CD8-positive, alpha-beta T cell (primary cell): ENCODE measurements at regions of chr7 and their contacts with region 1.

Region 1: GRCh38 chr7:144738708-144739314 is 97.0 kb downstream of the TPK1 start:
- DNase-seq: peak in 4 of 9 experiments; percentile 13 to 63 (median 34)
- ATAC-seq: peak; percentile 58
- H3K4me3 ChIP-seq: no peak overlapping the region
- H3K4me3 Mint-ChIP-seq: no peak overlapping the region
- H3K27ac ChIP-seq: no peak overlapping the region
- H3K27ac Mint-ChIP-seq: no peak overlapping the region
- H3K4me1 ChIP-seq: no peaks in the 10 kb centered on the region
- H3K4me1 Mint-ChIP-seq: peaks cover 9% of the 10 kb centered on the region
- H3K27me3 ChIP-seq: no peaks in the 10 kb centered on the region
- H3K27me3 Mint-ChIP-seq: no peaks in the 10 kb centered on the region
- CTCF ChIP-seq: peak; percentile 94

Region 2: DNA sequence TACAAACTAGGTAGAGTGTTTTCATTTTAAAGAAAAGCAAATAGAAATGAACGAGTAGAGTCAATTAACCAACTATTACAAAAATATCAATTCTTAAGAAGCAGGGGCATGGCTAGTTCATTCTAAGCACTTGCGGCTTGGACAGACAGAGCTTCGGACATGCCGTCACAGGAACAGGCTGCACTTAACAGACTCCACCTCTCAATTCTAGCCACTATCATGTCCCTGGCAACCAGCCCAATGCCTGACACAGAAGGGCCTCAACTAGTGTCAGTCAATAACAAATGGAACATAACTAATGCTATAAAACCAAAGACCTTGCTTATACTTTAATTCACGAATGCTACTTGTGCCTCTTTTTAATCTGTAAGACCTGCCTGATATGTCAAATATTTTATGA is 22.7 kb after region 1 on chr7:
- CTCF ChIA-PET with region 1: interaction called, 3 read pairs
- POLR2A ChIA-PET with region 1: no interaction called
- intact Hi-C with region 1: loop called in 1 of 2 experiments (anchors 2 kb)
- DNase-seq: no peak
- ATAC-seq: no peak
- H3K4me3 ChIP-seq: no peak overlapping the region
- H3K4me3 Mint-ChIP-seq: no peak overlapping the region
- H3K27ac ChIP-seq: no peak overlapping the region
- H3K27ac Mint-ChIP-seq: no peak overlapping the region
- H3K4me1 ChIP-seq: no peaks in the 10 kb centered on the region
- H3K4me1 Mint-ChIP-seq: no peaks in the 10 kb centered on the region
- H3K27me3 ChIP-seq: no peaks in the 10 kb centered on the region
- H3K27me3 Mint-ChIP-seq: no peaks in the 10 kb centered on the region
- CTCF ChIP-seq: no peak

Region 3: DNA sequence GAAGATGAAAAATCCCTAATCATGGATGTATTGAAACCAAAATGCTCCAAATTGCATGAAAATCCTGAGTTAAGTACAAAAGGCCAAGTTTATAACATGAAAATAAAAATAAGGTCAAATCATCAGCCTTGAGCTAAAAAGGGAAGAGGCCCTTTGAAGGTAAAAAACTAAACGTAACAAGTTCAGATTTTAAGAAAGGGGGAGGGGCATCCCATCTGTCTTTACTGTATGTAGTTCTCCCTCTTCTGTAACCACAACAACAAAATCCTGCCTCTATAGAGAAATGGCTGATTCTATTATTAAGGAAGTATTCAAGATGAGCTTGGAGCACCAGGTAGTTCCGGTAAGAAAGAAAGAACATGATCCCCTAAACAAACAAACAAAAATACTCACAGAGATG is 32.4 kb after region 1 on chr7:
- CTCF ChIA-PET with region 1: no interaction called
- POLR2A ChIA-PET with region 1: interaction called, 4 read pairs
- intact Hi-C with region 1: loop called in 1 of 2 experiments (anchors 5 kb)
- DNase-seq: no peak
- ATAC-seq: no peak
- H3K4me3 ChIP-seq: no peak overlapping the region
- H3K4me3 Mint-ChIP-seq: no peak overlapping the region
- H3K27ac ChIP-seq: no peak overlapping the region
- H3K27ac Mint-ChIP-seq: no peak overlapping the region
- H3K4me1 ChIP-seq: peaks cover 13% of the 10 kb centered on the region
- H3K4me1 Mint-ChIP-seq: peaks cover 29% of the 10 kb centered on the region
- H3K27me3 ChIP-seq: no peaks in the 10 kb centered on the region
- H3K27me3 Mint-ChIP-seq: no peaks in the 10 kb centered on the region
- CTCF ChIP-seq: no peak

Region 4: GRCh38 chr7:144786522-144786921 is 47.7 kb after region 1 on chr7:
- CTCF ChIA-PET with region 1: interaction called, 4 read pairs
- POLR2A ChIA-PET with region 1: no interaction called
- intact Hi-C with region 1: loop called in 1 of 2 experiments (anchors 5 kb)
- DNase-seq: peak in 2 of 9 experiments; percentile 31 to 50
- ATAC-seq: no peak
- H3K4me3 ChIP-seq: no peak overlapping the region
- H3K4me3 Mint-ChIP-seq: no peak overlapping the region
- H3K27ac ChIP-seq: no peak overlapping the region
- H3K27ac Mint-ChIP-seq: no peak overlapping the region
- H3K4me1 ChIP-seq: no peaks in the 10 kb centered on the region
- H3K4me1 Mint-ChIP-seq: peaks cover 7% of the 10 kb centered on the region
- H3K27me3 ChIP-seq: no peaks in the 10 kb centered on the region
- H3K27me3 Mint-ChIP-seq: no peaks in the 10 kb centered on the region
- CTCF ChIP-seq: no peak

Region 5: DNA sequence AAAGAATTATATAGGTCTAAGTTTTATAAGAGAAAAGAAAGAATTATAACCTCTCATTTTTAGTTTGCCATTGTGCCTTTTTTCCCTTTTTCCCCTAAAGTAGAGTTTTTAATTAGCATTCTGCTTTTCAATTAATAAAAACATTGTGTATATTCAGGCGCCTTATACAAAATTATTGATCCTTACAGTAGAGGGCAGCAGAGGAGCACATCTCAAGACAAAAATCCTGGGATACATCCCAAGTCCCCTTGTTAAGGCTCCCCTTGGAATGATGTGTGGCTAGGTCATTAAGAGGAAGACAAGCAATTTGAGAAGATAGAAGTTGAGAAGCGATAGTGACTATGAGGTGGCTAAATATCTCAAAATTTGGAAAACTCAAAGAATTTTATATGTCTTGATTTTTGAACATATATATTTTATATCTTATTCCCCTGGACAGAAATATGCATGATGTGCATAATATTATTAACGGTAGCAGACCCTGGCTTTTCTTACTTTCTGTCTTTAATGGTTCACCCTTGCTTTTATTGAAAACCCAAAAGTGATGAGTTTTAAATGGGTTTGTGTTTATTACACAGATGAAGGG is 116.1 kb after region 1 on chr7:
- CTCF ChIA-PET with region 1: interaction called, 5 read pairs
- POLR2A ChIA-PET with region 1: no interaction called
- intact Hi-C with region 1: loop called (anchors 2 to 5 kb)
- DNase-seq: peak in 1 of 9 experiments; percentile 32
- ATAC-seq: no peak
- H3K4me3 ChIP-seq: no peak overlapping the region
- H3K4me3 Mint-ChIP-seq: no peak overlapping the region
- H3K27ac ChIP-seq: no peak overlapping the region
- H3K27ac Mint-ChIP-seq: no peak overlapping the region
- H3K4me1 ChIP-seq: no peaks in the 10 kb centered on the region
- H3K4me1 Mint-ChIP-seq: no peaks in the 10 kb centered on the region
- H3K27me3 ChIP-seq: no peaks in the 10 kb centered on the region
- H3K27me3 Mint-ChIP-seq: no peaks in the 10 kb centered on the region
- CTCF ChIP-seq: no peak

Region 6: DNA sequence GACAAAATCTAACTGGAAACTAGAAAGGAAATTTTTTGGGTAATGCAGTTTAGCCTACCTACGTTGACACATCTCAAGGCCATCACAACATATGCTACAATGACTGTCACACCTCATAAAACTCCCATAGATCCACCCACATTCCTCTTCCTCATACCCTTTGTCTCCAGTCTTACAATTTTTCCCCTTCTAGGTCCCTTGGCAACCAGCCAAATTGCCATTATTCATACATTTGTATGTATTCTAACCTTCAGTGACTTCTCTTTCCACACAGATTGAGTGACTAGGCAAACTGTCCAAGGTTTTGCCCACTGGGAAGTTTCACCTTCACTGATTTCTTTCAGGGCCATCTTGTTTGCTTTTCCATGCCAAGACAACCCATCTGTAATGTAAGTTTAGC is 197.5 kb after region 1 on chr7:
- CTCF ChIA-PET with region 1: no interaction called
- POLR2A ChIA-PET with region 1: no interaction called
- intact Hi-C with region 1: loop called in 1 of 2 experiments (anchors 10 kb)
- DNase-seq: no peak
- ATAC-seq: no peak
- H3K4me3 ChIP-seq: no peak overlapping the region
- H3K4me3 Mint-ChIP-seq: no peak overlapping the region
- H3K27ac ChIP-seq: no peak overlapping the region
- H3K27ac Mint-ChIP-seq: no peak overlapping the region
- H3K4me1 ChIP-seq: no peaks in the 10 kb centered on the region
- H3K4me1 Mint-ChIP-seq: no peaks in the 10 kb centered on the region
- H3K27me3 ChIP-seq: no peaks in the 10 kb centered on the region
- H3K27me3 Mint-ChIP-seq: no peaks in the 10 kb centered on the region
- CTCF ChIP-seq: no peak

Region 7: DNA sequence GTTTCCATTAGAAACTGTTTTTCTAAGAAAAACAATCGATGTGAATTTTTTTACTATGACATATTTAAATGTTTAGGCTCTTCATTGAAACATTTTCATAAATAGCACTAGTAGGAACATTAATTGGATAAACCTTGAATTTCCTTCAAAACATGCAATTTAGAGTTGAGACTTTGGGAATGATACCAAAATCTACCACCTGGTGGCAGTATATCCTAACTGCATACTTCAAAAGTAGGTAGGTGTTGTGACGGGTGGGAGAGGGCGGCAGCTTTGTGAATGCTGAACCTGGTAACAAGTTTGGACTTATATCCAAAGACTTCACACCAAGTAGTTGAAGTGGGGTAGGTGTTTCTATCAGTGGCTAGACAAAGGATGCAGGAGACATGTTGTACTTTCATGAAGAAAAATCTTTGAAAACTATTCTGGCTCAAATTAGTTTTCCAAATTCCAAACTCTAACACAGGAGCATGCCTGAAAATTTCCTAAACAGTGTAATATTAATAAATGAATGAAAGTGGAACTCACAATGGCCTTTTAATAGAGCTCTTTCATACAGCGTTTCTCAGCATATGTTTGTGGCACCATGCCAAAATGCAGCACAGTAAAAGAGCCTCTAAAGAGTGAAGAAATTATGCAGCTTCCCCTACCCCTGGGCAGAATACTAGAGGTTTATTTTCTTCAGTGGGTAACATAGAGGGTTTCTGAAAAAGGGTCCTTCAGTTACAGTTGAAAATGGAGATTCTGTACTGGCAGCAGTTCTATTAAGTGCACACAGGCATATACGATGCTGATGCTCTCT is 298.0 kb after region 1 on chr7:
- CTCF ChIA-PET with region 1: interaction called, 3 read pairs
- POLR2A ChIA-PET with region 1: no interaction called
- intact Hi-C with region 1: loop called (anchors 1 to 5 kb)
- DNase-seq: peak in 6 of 9 experiments; percentile 6 to 62 (median 28)
- ATAC-seq: peak; percentile 65
- H3K4me3 ChIP-seq: no peak overlapping the region
- H3K4me3 Mint-ChIP-seq: peak overlapping the region; percentile 20
- H3K27ac ChIP-seq: no peak overlapping the region
- H3K27ac Mint-ChIP-seq: no peak overlapping the region
- H3K4me1 ChIP-seq: peaks cover 3% of the 10 kb centered on the region
- H3K4me1 Mint-ChIP-seq: peaks cover 2% of the 10 kb centered on the region
- H3K27me3 ChIP-seq: no peaks in the 10 kb centered on the region
- H3K27me3 Mint-ChIP-seq: peaks cover 12% of the 10 kb centered on the region
- CTCF ChIP-seq: peak; percentile 90

Region 8: DNA sequence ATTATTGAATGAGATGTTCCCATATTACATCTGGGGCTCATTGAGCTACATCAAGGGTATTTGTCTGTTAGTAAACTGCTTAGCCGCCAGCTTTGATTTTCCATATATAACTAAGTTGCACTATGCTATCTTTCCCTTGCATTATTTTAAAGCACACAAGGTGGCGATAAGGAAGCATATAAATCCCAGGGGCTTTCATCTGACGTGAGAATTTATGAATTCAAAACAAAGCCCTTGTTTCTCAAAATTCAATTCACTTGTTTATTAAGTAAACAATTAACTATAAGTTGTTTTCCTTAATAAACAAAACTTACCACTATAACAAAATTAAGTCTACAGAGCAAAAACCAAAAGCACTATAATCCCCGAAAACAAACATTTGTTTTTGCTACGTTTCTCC is 431.1 kb after region 1 on chr7:
- CTCF ChIA-PET with region 1: no interaction called
- POLR2A ChIA-PET with region 1: no interaction called
- intact Hi-C with region 1: no loop called
- DNase-seq: no peak
- ATAC-seq: no peak
- H3K4me3 ChIP-seq: no peak overlapping the region
- H3K4me3 Mint-ChIP-seq: no peak overlapping the region
- H3K27ac ChIP-seq: no peak overlapping the region
- H3K27ac Mint-ChIP-seq: no peak overlapping the region
- H3K4me1 ChIP-seq: no peaks in the 10 kb centered on the region
- H3K4me1 Mint-ChIP-seq: no peaks in the 10 kb centered on the region
- H3K27me3 ChIP-seq: no peaks in the 10 kb centered on the region
- H3K27me3 Mint-ChIP-seq: peaks cover 3% of the 10 kb centered on the region
- CTCF ChIP-seq: no peak

Region 9: DNA sequence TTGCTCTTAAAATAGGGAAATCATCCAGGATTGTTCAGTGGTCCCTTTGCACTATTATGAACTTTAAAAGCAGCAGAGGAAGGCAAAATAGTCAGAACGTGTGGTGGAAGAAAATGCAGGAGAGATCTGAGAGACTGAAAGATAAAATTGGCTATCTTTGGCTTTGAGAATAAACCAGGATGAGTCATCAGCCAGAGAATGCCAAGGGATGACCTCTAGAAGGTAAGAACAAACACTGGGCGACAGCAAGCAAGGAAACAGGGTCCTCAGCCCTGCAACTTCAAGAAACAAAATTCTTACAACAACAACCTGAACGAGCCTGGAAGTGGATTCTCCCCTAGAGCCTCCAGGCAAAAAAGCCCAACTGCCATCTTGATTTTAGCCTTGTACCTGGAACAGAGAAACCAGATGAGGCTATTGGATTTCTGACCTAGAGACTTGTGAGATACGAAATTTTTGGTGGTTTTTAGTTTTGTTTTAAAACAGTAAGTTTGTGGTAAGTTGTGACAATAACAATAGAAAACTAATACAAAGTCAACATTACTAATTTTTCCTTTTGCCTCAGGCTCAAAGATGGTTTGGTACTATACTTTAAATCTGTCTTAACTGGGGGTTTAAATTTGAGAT is 1247.5 kb after region 1 on chr7:
- CTCF ChIA-PET with region 1: no interaction called
- POLR2A ChIA-PET with region 1: no interaction called
- intact Hi-C with region 1: no loop called
- DNase-seq: no peak
- ATAC-seq: no peak
- H3K4me3 ChIP-seq: no peak overlapping the region
- H3K4me3 Mint-ChIP-seq: no peak overlapping the region
- H3K27ac ChIP-seq: no peak overlapping the region
- H3K27ac Mint-ChIP-seq: no peak overlapping the region
- H3K4me1 ChIP-seq: no peaks in the 10 kb centered on the region
- H3K4me1 Mint-ChIP-seq: no peaks in the 10 kb centered on the region
- H3K27me3 ChIP-seq: no peaks in the 10 kb centered on the region
- H3K27me3 Mint-ChIP-seq: no peaks in the 10 kb centered on the region
- CTCF ChIP-seq: no peak